ENCODE measurements at regions of chr9 and their contacts with region 1.

Region 1: GRCh38 chr9:127187231-127187956 is 65.0 kb upstream of the ANGPTL2 start:
- DNase-seq: peak; percentile 89 to 98
- H3K4me3 ChIP-seq: no peak overlapping the region
- H3K27ac ChIP-seq: peak overlapping the region; percentile 82
- H3K4me1 ChIP-seq: peaks cover 41% of the 10 kb centered on the region
- H3K27me3 ChIP-seq: no peaks in the 10 kb centered on the region
- CTCF ChIP-seq: no peak

Region 2: DNA sequence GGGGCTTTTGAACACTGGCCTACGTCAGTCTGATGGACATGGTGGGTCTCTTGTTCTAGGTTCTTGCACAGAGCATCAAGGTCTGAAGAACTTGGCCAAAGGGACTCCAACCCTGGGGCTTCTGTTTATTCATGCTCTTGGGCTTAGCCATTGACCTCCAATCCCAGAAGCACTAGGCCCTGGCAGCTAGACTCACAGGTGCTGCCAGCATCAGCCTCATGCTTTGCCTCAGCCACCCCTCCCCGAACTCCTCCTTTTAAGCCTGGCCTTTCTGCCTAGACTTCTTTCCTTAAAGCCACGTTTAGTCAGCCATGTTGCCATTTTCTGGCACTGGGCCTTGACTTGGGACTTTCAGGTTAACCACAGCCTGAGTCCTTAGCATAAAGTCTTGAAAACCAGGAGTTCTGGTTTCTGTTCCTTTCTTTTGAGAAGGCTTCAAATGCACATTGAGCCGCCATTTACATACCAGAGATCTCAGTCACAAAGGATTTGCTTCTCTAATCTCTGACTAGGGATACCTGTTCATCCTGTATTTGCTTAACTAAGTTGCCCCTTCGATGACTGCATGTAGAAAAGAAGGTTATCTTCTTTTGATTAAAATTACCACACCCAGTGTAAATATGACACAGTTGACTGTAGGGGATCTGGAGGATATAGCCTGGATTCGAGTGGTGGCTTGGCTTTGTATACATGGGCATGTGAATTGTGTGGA is 119.6 kb before region 1 on chr9:
- CTCF ChIA-PET with region 1: no interaction called
- POLR2A ChIA-PET with region 1: no interaction called
- intact Hi-C with region 1: loop called (anchors 1 kb)
- DNase-seq: peak; percentile 86 to 99
- H3K4me3 ChIP-seq: no peak overlapping the region
- H3K27ac ChIP-seq: peak overlapping the region; percentile 94
- H3K4me1 ChIP-seq: peaks cover 56% of the 10 kb centered on the region
- H3K27me3 ChIP-seq: no peaks in the 10 kb centered on the region
- CTCF ChIP-seq: no peak

Region 3: GRCh38 chr9:127112056-127112455 is 75.3 kb before region 1 on chr9:
- CTCF ChIA-PET with region 1: no interaction called
- POLR2A ChIA-PET with region 1: no interaction called
- intact Hi-C with region 1: loop called (anchors 5 kb)
- DNase-seq: peak; percentile 56 to 85
- H3K4me3 ChIP-seq: no peak overlapping the region
- H3K27ac ChIP-seq: no peak overlapping the region
- H3K4me1 ChIP-seq: peaks cover 46% of the 10 kb centered on the region
- H3K27me3 ChIP-seq: no peaks in the 10 kb centered on the region
- CTCF ChIP-seq: no peak

Region 4: DNA sequence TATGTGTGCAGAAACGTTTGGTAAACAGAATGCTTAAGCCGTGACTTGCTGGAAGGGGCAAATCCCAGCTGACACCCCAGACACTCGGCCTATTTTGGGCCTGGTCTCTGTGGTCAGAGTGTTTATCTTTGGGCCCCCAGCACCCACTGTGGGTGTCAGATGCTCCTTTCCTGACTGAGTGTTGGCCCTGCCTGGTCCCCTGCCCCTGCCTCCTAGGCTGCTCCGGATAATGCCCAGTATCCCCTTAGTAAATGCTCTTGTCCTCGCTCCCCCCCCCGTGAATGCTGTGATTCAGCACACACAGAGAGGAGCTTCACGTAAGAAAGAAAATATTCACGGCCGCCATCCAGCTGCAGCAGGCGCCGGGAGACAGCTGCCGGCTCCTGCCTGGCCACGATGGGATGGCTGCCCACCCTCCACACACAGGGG is 53.6 kb before region 1 on chr9:
- CTCF ChIA-PET with region 1: no interaction called
- POLR2A ChIA-PET with region 1: no interaction called
- intact Hi-C with region 1: loop called (anchors 2 kb)
- DNase-seq: no peak
- H3K4me3 ChIP-seq: no peak overlapping the region
- H3K27ac ChIP-seq: no peak overlapping the region
- H3K4me1 ChIP-seq: peaks cover 43% of the 10 kb centered on the region
- H3K27me3 ChIP-seq: no peaks in the 10 kb centered on the region
- CTCF ChIP-seq: no peak

Region 5: DNA sequence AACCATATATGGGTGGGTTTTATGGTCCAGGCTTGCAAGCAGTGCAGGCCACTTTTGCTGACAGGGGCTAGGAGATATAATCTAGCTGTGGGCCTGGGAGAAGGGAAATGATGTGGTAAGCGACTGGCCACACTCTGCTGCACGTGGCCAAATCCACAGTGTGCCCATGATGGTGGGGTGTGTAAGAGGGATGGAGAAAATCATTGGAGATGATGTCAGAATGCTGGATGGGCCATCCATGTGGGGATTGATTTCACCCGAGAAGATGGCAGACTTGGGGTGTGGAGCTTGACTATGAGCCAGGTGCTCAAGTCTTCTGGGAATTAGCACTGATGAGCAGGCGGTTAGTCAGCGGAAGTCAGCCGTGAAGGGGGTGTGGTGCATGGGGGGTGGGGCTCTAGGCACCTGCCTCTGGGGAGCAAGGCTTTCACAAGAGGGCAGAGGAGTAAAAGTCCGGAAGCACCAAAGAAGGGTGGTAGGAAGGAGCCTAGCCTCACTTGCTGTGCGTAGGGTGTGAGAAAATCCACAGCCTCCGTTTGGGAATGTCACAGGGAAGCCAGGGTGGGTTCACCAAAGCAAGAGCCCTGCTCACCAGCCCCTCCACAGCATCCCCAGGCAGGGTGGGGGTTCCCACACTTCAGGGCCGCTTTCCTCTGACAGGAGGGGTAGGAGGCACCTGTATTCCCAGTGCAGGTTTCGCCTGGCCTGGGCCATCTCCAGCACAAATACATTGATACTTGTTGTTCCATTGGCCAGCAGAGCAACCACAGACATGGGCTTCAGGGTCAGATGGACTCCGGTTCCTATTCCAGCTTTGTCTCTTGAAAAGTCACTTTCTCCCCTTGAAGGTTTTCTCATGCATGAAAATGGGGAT is 20.5 kb before region 1 on chr9:
- CTCF ChIA-PET with region 1: no interaction called
- POLR2A ChIA-PET with region 1: interaction called, 3 read pairs
- intact Hi-C with region 1: loop called (anchors 1 kb)
- DNase-seq: peak; percentile 65 to 81
- H3K4me3 ChIP-seq: no peak overlapping the region
- H3K27ac ChIP-seq: no peak overlapping the region
- H3K4me1 ChIP-seq: peaks cover 4% of the 10 kb centered on the region; the same call in 1 of the 2 replicates
- H3K27me3 ChIP-seq: no peaks in the 10 kb centered on the region
- CTCF ChIP-seq: no peak